Tibial artery (tissue), 4 donors: ENCODE measurements at regions of chr1 and their contacts with region 1.

Region 1: DNA sequence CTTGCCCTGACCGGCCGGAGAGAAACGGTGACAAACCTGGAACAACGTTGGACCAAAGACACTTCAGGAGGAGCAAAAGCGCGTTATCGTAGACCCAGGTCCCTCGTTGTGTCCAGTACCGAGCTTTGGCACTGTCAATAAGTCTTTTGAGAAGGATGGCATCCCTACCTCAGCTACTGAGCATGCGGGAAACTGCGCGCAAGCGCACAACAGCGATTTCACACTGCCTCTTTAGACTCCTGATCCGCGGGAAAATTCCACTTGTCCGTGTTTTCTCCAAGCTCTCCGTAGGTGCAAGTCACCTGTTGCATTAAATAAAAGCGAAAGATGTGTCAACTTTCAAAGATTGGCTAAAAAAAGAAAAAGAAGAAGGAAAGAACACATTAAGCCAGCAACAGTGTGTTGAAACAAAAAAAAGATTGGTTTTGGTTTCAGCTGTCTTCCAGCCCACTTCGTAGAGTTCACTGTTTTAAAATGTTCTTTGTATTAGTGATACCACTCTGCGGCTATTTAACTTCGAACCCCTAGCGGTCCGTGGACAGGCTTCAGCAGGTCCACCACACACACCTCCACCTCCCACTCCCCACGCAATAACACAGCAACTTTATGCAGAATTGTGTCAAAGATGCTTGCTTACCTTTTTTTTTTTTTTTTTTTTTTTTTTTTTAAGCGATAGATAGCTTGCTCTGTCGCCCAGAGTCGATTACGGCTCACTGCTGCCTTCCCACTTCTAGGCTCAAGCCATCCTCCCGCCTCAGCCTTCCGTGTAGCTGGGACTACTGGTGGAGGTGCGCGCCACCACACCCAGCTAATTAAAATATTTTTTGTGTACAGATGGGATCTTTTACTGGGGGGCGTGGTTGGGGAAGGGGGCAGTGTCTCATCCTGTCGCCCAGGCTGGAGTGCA is at the start of gene BPNT1:
- DNase-seq: peak; percentile 93 to 95
- H3K4me3 ChIP-seq: peak within 1 kb of the TSS; percentile 53 to 67
- H3K27ac ChIP-seq: peak within 1 kb of the TSS; percentile 64 to 65
- H3K4me1 ChIP-seq: peaks cover 0 to 14% (median 2%) of the 10 kb centered on the region in 4 donors
- H3K27me3 ChIP-seq: no peaks in the 10 kb centered on the region
- CTCF ChIP-seq: no peak

Region 2: DNA sequence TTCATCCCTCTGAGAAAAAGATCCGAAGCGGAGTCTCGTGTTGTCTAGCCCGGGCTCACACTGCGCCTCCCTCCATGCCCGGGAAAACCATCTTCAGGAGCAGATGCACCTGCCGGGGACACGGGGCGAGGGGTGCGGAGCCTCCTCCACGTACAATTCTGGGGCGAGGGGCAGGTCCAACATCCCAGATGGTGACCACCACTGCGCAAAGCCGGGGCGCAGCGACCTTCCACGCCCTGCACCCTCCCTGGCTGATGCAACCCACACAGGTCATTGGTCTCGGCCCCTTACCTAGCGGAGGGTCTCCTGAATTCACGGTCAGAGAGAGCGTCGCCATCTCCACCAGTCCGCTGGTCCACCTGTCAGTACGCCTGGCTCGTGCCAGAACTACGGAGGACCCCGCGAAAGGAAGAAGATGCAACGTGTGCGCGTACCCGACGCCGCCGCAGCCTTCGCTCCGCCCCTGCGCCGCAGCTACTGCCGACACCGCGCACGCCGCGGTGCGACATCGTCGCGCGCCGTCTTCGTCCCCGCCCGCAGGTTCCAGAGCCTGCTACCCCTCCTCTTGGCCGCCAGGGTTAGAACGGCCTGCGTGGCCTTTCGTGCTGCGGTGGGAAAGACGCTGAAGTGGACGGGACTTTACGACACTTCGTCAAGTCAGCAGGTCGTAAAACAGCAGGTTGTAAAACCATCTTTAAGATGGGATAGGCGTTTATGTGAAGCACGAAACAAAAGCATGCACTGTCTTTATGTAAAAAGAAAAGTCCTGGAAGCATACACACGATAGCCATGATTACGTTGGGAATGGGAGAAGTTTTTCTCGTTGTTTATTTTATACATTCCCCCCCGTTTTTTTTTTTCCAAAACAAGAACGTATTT is 43.6 kb before region 1 on chr1 and contains the start of gene EPRS1:
- intact Hi-C with region 1: loop called (anchors 5 kb)
- DNase-seq: peak; percentile 90 to 96
- H3K4me3 ChIP-seq: peak within 1 kb of the TSS; percentile 86 to 97
- H3K27ac ChIP-seq: peak within 1 kb of the TSS; percentile 92 to 96
- H3K4me1 ChIP-seq: peaks cover 0 to 28% (median 14%) of the 10 kb centered on the region in 4 donors
- H3K27me3 ChIP-seq: no peaks in the 10 kb centered on the region
- CTCF ChIP-seq: peak; percentile 85 to 91

Region 3: GRCh38 chr1:220894025-220894923 is 804.4 kb after region 1 on chr1:
- intact Hi-C with region 1: no loop called
- DNase-seq: no peak
- H3K4me3 ChIP-seq: no peak overlapping the region
- H3K27ac ChIP-seq: no peak overlapping the region
- H3K4me1 ChIP-seq: peaks cover 0 to 9% (median 0%) of the 10 kb centered on the region in 4 donors
- H3K27me3 ChIP-seq: peaks cover 0 to 53% of the 10 kb centered on the region in 2 donors
- CTCF ChIP-seq: no peak